GM10248 (cell line): ENCODE measurements at regions of chr3 and their contacts with region 1.

Region 1: GRCh38 chr3:129052675-129053074 is 7.9 kb upstream of the GP9 start:
- DNase-seq: no peak
- CTCF ChIP-seq: no peak

Region 2: DNA sequence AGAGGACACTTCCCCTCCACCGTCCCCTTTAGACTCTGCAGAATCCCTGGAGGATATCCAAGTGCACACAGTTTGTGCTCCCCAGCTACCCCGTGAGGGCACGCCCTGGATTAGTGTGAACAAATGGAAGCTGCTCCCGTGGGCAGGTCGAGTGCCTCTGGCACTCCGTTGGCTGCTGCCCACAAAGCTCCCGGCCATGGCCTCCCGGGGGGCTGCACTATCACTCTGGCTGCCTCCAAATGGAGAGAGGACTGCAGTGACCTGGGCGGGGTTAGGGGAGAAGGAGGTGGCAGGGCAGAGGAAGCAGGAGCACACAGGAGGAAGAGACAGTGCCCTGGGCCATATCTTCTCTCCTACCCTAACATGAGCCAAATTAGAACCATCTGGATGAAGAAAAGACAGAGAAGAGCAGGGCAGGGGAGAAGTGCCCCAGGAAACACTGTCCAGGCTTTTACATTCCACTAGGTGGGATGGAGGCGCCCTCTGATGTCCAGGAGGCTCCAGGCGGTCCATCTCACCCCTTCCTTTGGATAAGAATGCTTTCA is 202.7 kb before region 1 on chr3:
- CTCF ChIA-PET with region 1: no interaction called
- POLR2A ChIA-PET with region 1: no interaction called
- DNase-seq: peak; percentile 9
- CTCF ChIP-seq: no peak

Region 3: DNA sequence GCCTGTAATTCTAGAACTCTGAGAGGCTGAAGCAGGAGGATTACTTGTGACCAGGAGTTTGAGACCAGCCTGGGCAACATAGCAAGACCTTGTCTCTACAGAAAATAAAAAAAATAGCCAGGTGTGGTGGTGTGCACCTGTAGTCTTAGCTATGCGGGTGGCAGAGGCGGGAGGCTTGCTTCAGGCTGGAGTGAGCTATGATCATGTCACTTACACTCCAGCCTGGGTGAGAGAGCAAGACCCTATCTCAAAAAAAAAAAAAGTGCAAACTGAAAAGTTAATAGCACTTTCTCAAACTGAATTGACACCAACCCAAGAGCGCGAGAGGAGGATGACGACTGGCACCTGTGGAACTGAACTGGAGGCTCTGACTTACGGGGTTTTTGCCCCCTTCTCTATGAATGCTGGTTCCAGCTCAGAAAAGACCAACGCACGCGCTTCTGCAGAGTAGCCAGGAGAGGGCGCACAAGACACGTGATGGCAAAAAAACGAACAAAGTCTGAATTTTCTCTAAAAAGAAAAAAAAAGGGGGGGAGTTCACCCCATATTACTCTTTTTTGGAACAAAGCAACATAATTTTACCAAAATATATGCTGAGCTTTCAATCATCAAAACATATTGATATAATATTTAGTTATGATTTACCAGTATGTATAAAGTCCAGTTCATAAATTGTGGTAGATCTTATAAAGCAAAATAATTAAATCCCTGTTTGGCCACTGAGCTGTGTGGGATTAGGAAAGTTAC is 82.5 kb before region 1 on chr3:
- CTCF ChIA-PET with region 1: interaction called, 21 read pairs
- POLR2A ChIA-PET with region 1: no interaction called
- DNase-seq: peak; percentile 68
- CTCF ChIP-seq: peak; percentile 95

Region 4: GRCh38 chr3:129026728-129027543 is 25.7 kb before region 1 on chr3:
- CTCF ChIA-PET with region 1: interaction called, 35 read pairs
- POLR2A ChIA-PET with region 1: interaction called, 4 read pairs
- DNase-seq: peak; percentile 98
- CTCF ChIP-seq: peak; percentile 72

Region 5: GRCh38 chr3:129068291-129068886 is 15.7 kb after region 1 on chr3:
- CTCF ChIA-PET with region 1: interaction called, 96 read pairs
- POLR2A ChIA-PET with region 1: no interaction called
- DNase-seq: no peak
- CTCF ChIP-seq: no peak

Region 6: DNA sequence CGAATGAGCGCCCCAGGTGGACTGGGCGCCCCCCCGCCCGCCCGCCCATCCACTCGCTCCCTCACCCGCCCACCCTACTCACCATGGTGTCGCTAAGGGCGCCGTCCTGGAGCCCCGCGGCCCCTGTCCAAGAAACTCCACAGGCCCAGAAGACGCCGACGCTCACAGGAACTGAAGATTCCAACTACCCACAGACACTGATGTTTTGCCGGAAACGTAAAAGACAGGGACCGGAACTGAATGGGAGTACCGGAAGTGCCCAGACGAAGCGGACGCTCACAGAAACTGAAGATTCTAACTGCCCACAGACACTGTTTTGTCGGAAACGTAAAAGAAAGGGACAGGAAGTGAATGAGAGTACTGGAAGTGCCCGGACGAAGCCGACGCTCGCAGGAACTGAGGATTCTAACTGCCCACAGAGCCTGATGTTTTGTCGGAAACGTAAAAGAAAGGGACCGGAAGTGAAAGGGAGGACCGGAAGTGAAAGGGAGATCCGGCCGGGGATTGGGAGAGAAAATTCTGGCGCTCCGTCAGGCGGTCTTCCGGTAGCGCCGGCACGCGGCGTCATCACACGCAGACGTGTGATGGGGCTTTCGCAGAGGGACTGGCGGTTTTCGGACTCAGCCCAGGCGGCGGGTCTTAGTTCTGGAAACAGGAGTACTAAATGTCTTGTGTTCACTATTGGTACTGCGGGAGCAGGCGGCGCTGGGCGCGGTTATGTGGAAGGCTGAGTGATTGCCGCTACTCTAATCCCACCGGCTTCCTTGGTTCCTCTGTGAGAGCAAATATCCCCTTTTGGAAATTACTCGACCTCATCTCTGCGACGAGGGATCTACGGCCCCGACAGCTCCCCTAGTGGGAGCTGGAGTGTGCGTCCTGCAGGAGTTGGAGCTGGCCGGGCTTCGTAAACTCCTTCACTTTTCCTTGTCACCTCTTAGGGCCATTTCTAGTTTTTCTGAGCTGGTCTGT is 108.5 kb after region 1 on chr3 and contains the start of gene ISY1:
- CTCF ChIA-PET with region 1: interaction called, 14 read pairs
- POLR2A ChIA-PET with region 1: no interaction called
- DNase-seq: peak; percentile 91
- CTCF ChIP-seq: peak; percentile 81

Region 7: DNA sequence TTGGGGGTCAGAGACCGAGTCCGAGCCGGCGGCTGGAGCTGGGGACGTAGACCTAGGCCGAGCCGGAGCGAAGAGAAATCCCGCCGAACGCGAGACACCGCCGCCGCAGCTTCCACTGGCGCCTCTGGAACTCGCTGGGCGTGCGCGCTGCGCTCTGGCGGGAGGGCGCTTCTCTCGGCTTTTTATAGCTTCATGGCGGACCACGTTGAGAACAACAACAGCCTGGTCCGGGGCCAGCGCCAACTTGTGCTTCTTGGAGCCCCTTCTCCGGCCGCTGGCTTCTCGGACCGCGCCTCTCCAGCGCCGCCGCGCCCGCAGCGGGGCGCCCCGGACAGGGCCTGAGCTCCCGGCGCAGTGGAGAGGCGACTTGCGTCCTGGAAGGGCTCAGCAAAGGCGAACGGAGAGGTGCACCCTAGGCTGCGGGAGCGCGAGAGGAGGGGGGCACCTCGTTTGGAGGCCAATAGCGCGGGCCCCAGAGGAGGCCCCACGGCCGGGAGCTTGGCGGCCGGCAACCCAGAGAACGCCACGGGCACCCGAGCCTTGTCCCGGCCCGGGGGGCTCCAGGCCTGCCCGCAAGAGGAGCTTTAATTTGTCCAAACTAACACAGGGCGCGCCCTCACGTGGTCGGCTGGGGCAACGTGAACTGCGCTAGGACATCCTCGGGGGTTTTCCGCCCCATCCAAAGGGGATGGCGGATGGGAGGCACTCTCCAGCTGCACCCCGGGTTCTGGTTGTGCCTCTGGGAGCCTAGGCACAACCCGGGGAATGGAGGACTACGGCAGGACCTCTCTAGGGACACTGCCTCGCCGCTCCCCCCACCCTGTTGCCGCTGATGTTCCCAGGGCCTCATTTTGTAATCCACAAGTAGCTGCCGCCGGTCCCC is 263.7 kb after region 1 on chr3:
- CTCF ChIA-PET with region 1: interaction called, 15 read pairs
- POLR2A ChIA-PET with region 1: interaction called, 4 read pairs
- DNase-seq: peak; percentile 83
- CTCF ChIP-seq: peak; percentile 79

Region 8: DNA sequence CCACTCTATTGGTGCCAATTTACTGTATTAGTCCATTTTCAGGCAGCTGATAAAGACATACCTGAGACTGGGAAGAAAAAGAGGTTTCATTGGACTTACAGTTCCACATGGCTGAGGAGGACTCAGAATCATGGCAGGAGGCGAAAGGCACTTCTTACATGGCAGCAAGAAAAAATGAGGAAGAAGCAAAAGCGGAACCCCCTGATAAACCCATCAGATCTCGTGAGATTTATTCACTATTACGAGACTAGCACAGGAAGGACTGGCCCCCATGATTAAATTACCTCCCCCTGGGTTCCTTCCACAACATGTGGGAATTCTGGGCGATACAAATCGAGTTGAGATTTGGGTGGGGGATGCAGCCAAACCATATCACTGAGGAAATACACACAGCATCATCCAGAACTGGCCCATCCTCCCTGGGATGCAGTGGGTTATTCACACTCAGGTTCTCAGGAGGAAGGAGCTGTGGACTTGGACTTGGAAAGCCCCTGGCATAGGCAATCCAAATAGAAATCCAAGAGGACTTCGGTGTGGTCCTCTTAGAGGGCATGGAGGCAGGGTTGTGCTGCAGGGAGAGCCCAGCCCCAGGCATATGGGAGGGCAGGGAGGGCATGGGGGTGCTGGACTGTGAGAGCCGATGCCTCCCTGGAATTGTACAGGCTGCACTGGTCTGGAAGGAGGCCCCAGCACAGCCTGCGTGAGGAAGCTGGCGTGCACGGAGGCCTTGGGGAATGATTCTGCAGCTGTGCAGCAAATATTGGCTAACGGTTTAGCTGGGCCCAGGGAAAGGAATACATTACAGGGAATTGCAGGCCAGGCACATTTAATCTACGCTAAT is 312.8 kb after region 1 on chr3:
- CTCF ChIA-PET with region 1: no interaction called
- POLR2A ChIA-PET with region 1: no interaction called
- DNase-seq: no peak
- CTCF ChIP-seq: no peak